MCF 10A (cell line): ENCODE measurements at regions of chr6 and their contacts with region 1.

Region 1: DNA sequence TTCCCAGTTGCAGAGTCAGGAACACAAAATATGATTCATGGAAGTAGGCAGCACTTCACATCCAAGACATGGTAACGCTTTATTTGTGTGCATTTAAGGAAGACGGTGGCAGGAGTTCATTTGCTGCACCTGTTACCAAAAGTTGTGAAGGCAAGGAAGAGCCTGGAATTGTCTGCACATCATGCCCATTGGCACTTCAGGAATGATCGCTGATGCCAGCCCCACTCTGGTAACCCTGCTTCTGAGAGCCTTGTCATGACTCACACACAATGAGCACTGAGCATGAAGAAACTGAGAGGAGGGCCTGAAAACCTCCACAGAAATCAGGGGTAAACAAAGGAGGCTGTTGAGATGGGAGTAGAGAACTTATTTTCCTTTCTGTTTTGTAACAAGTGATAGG is 181.1 kb downstream of the RPS12 start:
- DNase-seq: peak; percentile 11
- H3K4me3 Mint-ChIP-seq: no peak overlapping the region
- H3K27ac Mint-ChIP-seq: no peak overlapping the region
- H3K4me1 Mint-ChIP-seq: no peaks in the 10 kb centered on the region
- H3K27me3 Mint-ChIP-seq: peaks cover 100% of the 10 kb centered on the region
- CTCF ChIP-seq: no peak

Region 2: DNA sequence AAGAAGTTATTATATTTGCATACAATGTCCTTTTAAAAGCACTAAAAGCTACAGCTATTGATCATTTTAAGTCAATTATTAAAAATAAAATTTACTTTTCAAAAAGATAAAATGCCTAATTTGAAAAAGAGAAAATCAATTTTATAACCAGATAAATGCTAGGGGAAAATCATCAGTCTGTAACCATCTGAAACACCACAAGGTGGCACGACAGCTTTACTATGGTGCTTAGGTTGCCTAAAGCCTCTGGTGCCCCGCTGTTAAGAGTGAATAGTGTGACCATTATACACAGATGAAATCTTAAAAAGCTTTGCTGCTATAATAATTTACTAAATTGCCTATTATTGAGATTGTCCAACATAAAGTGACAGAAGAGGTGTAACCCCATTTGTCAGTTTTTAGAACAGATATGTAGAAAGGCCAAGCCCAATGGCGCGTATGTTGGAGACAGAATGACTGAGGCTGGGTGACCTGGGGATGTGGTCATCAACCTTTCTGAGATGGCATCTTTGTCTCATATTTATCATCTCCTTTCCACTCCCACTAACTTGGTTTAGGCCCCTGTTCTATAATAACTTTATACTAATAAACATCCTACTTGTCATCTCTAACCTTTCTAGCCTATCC is 695.0 kb before region 1 on chr6:
- CTCF ChIA-PET with region 1: no interaction called
- POLR2A ChIA-PET with region 1: no interaction called
- intact Hi-C with region 1: no loop called
- DNase-seq: peak; percentile 70
- H3K4me3 Mint-ChIP-seq: no peak overlapping the region
- H3K27ac Mint-ChIP-seq: no peak overlapping the region
- H3K4me1 Mint-ChIP-seq: no peaks in the 10 kb centered on the region
- H3K27me3 Mint-ChIP-seq: no peaks in the 10 kb centered on the region
- CTCF ChIP-seq: peak; percentile 74

Region 3: DNA sequence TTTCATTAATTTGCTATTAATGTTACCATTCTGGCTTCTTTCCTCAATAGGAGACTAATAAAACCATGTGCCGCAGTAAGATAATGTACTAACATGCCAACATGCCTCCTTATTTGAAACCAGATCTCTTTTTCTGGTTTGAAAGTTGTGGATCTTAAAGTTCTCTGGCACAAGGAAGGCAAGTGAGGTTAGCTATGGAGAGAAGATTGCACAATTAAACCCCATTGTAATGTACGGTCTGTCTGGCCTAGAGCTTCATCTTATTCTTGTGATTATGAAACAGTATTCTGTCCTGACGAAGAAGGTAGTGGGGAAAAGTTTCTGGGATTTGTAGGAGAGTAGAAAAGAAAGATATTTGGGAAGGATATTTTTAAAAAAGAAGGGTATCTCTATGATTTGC is 314.1 kb after region 1 on chr6:
- CTCF ChIA-PET with region 1: no interaction called
- POLR2A ChIA-PET with region 1: no interaction called
- intact Hi-C with region 1: loop called (anchors 10 kb)
- DNase-seq: no peak
- H3K4me3 Mint-ChIP-seq: no peak overlapping the region
- H3K27ac Mint-ChIP-seq: no peak overlapping the region
- H3K4me1 Mint-ChIP-seq: no peaks in the 10 kb centered on the region
- H3K27me3 Mint-ChIP-seq: peaks cover 81% of the 10 kb centered on the region
- CTCF ChIP-seq: no peak

Region 4: DNA sequence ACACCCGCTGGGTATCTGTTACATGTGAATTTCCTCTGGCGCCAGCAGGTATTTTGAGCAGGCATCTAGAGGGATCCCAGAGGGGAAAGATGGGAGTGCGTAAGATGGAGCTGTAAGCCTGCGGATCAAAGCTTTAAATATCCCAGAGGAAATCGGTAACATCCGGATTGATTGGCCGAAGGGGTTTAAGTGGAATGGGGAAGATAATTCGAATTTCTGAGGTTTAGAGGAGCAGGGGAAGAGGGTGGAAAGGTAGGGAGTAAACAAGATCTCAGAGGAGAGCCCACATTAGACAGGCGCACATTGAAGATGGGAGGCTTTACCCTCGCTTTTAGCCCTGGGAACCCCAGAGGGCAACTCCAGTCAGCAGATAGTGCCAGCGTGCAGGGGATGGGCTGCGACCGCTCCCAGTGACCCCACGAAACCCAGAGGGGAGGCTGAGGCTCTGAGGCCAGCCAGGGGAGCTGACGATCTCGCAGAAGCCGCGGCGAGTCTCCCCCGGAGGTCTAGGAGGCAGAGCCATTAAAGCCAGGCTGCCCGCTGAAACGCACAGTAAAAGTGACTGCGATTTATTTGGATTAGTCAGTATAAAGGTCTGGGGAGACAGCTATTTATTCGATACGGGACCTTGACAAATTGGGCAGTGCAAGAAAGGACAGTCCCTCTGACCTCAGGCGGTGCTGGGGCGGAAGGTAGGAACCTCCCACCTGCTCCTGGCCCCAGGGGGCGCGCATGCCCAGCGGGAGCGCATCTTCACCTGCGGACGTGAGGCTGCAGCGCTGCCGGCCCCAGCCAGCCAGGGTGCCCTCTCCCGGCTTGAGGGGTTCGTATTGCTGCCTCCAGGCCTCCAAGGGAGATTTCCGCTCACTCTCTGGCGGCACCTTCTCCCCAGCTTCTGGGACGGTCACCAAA is 859.2 kb after region 1 on chr6:
- CTCF ChIA-PET with region 1: no interaction called
- POLR2A ChIA-PET with region 1: no interaction called
- intact Hi-C with region 1: no loop called
- DNase-seq: no peak
- H3K4me3 Mint-ChIP-seq: no peak overlapping the region
- H3K27ac Mint-ChIP-seq: no peak overlapping the region
- H3K4me1 Mint-ChIP-seq: no peaks in the 10 kb centered on the region
- H3K27me3 Mint-ChIP-seq: no peaks in the 10 kb centered on the region
- CTCF ChIP-seq: no peak